T-cell (primary cell): ENCODE measurements at regions of chr9 and their contacts with region 1.

Region 1: DNA sequence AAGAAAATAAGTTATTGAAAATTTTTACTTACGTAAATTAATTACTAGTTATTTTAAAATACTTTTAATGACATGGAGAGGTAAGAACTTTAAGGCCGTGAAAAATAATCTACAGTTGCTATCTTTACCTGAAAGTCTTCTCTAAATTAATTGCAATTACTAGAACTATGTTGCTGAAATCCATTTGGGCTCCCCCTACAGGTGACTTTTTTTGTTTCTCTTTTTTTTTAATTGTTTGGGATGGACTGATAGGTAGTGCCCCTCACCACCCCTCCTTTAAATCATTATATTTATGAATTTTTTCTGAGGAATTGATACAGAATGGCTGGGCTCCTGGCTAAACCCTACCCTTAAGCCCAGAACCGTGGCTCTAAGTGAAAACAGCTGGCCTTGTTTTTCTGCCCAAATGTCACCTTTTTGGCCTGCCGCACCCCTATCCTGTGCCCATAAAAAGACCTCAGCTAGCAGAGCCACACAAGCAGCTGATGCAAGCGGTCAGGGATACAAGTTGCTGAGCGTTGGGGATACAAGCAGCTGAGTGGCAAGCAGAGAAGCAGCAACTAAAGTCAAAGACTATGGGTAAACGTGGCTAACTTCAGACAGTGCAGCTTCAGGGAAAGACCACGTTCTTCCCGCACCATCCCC is 315.2 kb upstream of the ACO1 start:
- DNase-seq: no peak
- ATAC-seq: no peak
- H3K4me3 ChIP-seq: no peak overlapping the region
- H3K4me3 Mint-ChIP-seq: no peak overlapping the region
- H3K27ac ChIP-seq: no peak overlapping the region
- H3K27ac Mint-ChIP-seq: no peak overlapping the region
- H3K4me1 ChIP-seq: no peaks in the 10 kb centered on the region
- H3K4me1 Mint-ChIP-seq: no peaks in the 10 kb centered on the region
- H3K27me3 ChIP-seq: peaks cover 0 to 2% of the 10 kb centered on the region in 2 experiments
- H3K27me3 Mint-ChIP-seq: no peaks in the 10 kb centered on the region

Region 2: DNA sequence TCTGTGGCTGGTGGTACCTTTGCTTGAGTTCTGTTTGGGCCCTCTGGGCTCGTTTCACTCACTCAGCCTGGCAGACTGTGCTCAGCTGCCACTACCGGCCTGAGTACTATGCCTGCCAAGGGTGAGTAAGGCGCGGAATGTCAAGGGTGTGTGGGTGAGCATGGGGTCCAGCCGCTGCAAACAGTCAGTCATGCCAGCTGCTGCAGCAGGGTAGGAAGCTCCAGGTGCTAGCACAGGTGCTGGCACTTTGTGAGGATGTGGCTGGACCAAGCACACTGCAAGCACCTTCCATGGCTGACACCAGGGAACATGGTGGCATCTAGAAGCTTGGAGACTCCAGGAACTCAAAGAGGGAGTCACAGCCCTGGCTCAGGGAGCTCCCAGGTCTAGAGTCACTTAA is 53.5 kb before region 1 on chr9:
- CTCF ChIA-PET with region 1: no interaction called
- POLR2A ChIA-PET with region 1: no interaction called
- DNase-seq: no peak
- ATAC-seq: no peak
- H3K4me3 ChIP-seq: no peak overlapping the region
- H3K4me3 Mint-ChIP-seq: no peak overlapping the region
- H3K27ac ChIP-seq: no peak overlapping the region
- H3K27ac Mint-ChIP-seq: no peak overlapping the region
- H3K4me1 ChIP-seq: no peaks in the 10 kb centered on the region
- H3K4me1 Mint-ChIP-seq: no peaks in the 10 kb centered on the region
- H3K27me3 ChIP-seq: peaks cover 0 to 3% of the 10 kb centered on the region in 2 experiments
- H3K27me3 Mint-ChIP-seq: no peaks in the 10 kb centered on the region

Region 3: DNA sequence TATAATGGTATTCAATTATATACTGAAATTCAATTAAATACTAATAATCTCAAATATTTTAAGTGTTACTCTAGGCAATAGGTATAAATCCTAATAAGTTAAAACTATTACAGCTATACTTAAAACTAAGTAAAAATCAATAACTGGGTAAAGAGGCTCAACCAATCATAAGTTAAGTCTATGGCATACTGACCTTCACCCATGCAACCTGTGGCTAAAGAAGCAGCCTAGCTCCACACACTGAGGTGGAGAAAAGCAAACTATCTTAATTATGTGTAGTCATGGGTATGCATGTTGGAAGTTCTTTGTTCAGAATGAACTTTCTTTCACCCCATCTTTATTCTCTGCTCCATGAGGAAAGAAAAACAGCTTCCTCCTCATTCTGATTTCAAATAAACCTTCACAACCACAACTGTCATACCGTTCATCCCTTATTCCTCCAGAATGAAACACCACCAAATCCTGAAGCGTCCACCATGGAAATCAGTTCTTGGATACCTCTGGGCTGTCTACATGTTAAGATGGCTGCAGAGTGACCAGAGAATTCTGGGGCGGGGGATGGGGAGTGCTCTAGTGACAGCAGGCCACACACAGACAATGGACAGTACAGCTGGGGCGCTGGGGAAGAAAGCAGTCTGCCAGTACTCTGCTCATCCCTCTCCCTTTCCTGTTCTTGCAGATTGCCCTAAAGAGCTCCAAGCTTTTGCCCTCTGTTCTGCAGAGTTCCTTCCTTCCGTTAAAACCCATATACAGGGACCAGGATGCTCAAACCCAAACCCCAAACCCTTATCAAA is 394.4 kb after region 1 on chr9:
- CTCF ChIA-PET with region 1: no interaction called
- POLR2A ChIA-PET with region 1: interaction called in 1 of 2 experiments, 14 read pairs
- DNase-seq: no peak
- ATAC-seq: no peak
- H3K4me3 ChIP-seq: no peak overlapping the region
- H3K4me3 Mint-ChIP-seq: no peak overlapping the region
- H3K27ac ChIP-seq: no peak overlapping the region
- H3K27ac Mint-ChIP-seq: no peak overlapping the region
- H3K4me1 ChIP-seq: no peaks in the 10 kb centered on the region
- H3K4me1 Mint-ChIP-seq: no peaks in the 10 kb centered on the region
- H3K27me3 ChIP-seq: no peaks in the 10 kb centered on the region
- H3K27me3 Mint-ChIP-seq: no peaks in the 10 kb centered on the region

Region 4: GRCh38 chr9:32500768-32501167 is 431.5 kb after region 1 on chr9:
- CTCF ChIA-PET with region 1: no interaction called
- POLR2A ChIA-PET with region 1: no interaction called
- DNase-seq: no peak
- ATAC-seq: no peak
- H3K4me3 ChIP-seq: no peak overlapping the region
- H3K4me3 Mint-ChIP-seq: no peak overlapping the region
- H3K27ac ChIP-seq: no peak overlapping the region
- H3K27ac Mint-ChIP-seq: no peak overlapping the region
- H3K4me1 ChIP-seq: no peaks in the 10 kb centered on the region
- H3K4me1 Mint-ChIP-seq: peaks cover 2 to 16% (median 12%) of the 10 kb centered on the region in 3 donors
- H3K27me3 ChIP-seq: no peaks in the 10 kb centered on the region
- H3K27me3 Mint-ChIP-seq: no peaks in the 10 kb centered on the region